ENCODE measurements at regions of chr3 and their contacts with region 1.

Region 1: GRCh38 chr3:150721285-150722130 is 17.8 kb upstream of the ERICH6 start:
- DNase-seq: no peak
- ATAC-seq: peak; percentile 37 to 81 (median 77)
- H3K4me3 ChIP-seq: peak overlapping the region in 1 of 12 donors; percentile 11
- H3K27ac ChIP-seq: no peak overlapping the region
- H3K4me1 ChIP-seq: peaks cover 0 to 7% (median 4%) of the 10 kb centered on the region in 12 donors
- H3K27me3 ChIP-seq: no peaks in the 10 kb centered on the region
- CTCF ChIP-seq: peak; percentile 78 to 92 (median 84)
- POLR2A ChIP-seq: no peak

Region 2: GRCh38 chr3:150408221-150409102 is 313.0 kb before region 1 on chr3 and contains the start of gene TSC22D2:
- intact Hi-C with region 1: no loop called
- DNase-seq: peak; percentile 96 to 98 (median 96)
- ATAC-seq: peak; percentile 72 to 89 (median 85)
- H3K4me3 ChIP-seq: peak within 1 kb of the TSS; percentile 71 to 92 (median 86)
- H3K27ac ChIP-seq: peak within 1 kb of the TSS; percentile 96 to 100 (median 99)
- H3K4me1 ChIP-seq: peaks cover 0 to 32% (median 10%) of the 10 kb centered on the region in 12 donors
- H3K27me3 ChIP-seq: no peaks in the 10 kb centered on the region
- CTCF ChIP-seq: peak in 5 of 12 donors; percentile 14 to 43 (median 23)
- POLR2A ChIP-seq: peak; percentile 98 to 99
- total RNA-seq, gene TSC22D2: 12.7 to 55.8 (median 32.6) TPM

Region 3: DNA sequence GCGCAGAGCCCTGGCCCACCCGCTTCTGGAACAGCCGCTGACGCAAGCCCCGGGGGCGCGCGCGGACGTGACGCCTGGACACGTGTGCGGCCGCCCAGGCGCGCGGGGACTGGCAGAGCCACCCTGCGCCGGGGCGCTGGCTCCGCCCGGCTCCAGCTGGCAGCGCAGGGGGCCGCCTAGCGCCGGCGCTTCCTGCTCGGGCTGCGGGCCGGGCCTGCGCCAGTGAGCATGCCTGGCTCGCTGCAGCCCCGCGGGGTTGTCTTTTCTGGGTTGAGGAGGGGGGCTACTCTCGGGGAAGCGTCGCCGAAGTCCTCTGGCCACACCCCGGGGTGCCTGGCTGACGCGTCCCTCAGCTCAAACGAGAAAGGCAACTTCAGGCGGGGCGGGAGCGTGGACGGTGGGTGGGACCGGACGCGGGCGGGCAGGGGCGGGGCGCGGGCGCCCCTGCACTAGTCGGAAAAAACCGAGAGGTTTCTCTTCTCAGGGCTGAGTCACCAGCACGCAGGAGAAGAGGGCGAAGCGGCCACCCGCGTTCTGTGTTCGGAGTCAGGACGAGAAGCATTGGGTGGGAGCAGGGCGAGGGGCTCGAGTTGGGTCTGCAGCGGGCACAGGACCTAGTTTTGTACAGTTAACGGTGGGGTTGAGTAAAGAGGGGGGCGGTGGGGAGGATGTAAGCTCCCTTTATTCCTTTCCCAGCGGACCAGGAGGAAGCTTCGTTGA is 41.8 kb after region 1 on chr3 and contains the start of gene SIAH2:
- intact Hi-C with region 1: loop called in 8 of 10 experiments (anchors 2 to 5 kb)
- DNase-seq: peak; percentile 93 to 96 (median 95)
- ATAC-seq: peak; percentile 89 to 95 (median 92)
- H3K4me3 ChIP-seq: peak within 1 kb of the TSS; percentile 48 to 93 (median 83)
- H3K27ac ChIP-seq: peak within 1 kb of the TSS; percentile 87 to 99 (median 96)
- H3K4me1 ChIP-seq: peaks cover 5 to 42% (median 29%) of the 10 kb centered on the region in 12 donors
- H3K27me3 ChIP-seq: no peaks in the 10 kb centered on the region
- CTCF ChIP-seq: peak in 1 of 12 donors; percentile 9
- POLR2A ChIP-seq: peak in 1 of 2 donors; percentile 89
- total RNA-seq, gene SIAH2: 16.9 to 38.7 (median 23.4) TPM

Region 4: DNA sequence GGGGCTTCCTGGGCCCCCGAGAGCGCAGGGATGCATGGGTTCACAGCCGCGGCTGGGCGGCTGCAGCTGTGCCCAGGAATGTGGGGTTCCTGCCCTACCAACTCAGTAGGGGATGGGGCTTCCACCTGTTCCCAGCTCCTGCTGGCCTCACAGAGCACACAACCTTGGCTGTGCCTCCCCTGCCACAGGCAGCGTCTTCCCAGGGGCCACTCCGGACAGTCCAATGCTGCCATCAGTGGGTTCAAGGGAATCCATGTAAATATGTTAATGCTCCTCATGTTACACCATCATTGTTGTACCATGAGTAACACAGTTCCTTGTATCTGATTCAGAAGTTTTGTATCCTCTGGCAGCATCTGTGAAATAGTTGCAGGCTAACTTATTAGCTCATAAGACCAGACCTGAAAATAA is 53.6 kb after region 1 on chr3:
- intact Hi-C with region 1: loop called in 4 of 10 experiments (anchors 5 to 10 kb)
- DNase-seq: no peak
- ATAC-seq: no peak
- H3K4me3 ChIP-seq: no peak overlapping the region
- H3K27ac ChIP-seq: no peak overlapping the region
- H3K4me1 ChIP-seq: peaks cover 0 to 5% (median 0%) of the 10 kb centered on the region in 12 donors
- H3K27me3 ChIP-seq: no peaks in the 10 kb centered on the region
- CTCF ChIP-seq: no peak
- POLR2A ChIP-seq: no peak

Region 5: GRCh38 chr3:150787741-150788370 is 66.3 kb after region 1 on chr3:
- intact Hi-C with region 1: loop called in 4 of 10 experiments (anchors 2 to 10 kb)
- DNase-seq: peak; percentile 75 to 91 (median 86)
- ATAC-seq: peak in 3 of 4 donors; percentile 79 to 88 (median 84)
- H3K4me3 ChIP-seq: no peak overlapping the region
- H3K27ac ChIP-seq: no peak overlapping the region
- H3K4me1 ChIP-seq: no peaks in the 10 kb centered on the region
- H3K27me3 ChIP-seq: peaks cover 0 to 11% (median 0%) of the 10 kb centered on the region in 9 donors
- CTCF ChIP-seq: peak; percentile 77 to 95 (median 88)
- POLR2A ChIP-seq: no peak

Region 6: DNA sequence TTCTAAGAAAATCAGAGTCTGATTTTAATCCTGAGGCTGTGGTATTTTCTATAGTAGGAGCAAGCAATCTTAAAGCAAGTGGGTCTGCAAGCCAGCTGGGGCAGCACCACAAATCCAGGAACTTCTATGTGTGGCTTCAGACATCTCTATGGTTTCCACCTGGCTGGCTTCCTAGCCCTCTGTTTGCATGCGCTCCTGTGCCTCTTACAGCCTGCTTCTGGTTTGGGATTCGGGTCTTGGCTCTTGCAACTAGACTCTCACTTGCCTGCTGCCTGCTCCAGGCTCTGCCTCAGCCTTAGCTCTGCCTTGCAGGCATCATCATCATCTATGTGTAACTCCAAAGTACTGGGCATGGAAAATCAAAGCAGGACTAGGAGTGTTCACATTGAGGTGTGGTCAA is 140.3 kb after region 1 on chr3:
- intact Hi-C with region 1: loop called (anchors 1 to 5 kb)
- DNase-seq: no peak
- ATAC-seq: no peak
- H3K4me3 ChIP-seq: no peak overlapping the region
- H3K27ac ChIP-seq: no peak overlapping the region
- H3K4me1 ChIP-seq: peaks cover 0 to 2% (median 0%) of the 10 kb centered on the region in 12 donors
- H3K27me3 ChIP-seq: no peaks in the 10 kb centered on the region
- CTCF ChIP-seq: no peak
- POLR2A ChIP-seq: no peak

Region 7: DNA sequence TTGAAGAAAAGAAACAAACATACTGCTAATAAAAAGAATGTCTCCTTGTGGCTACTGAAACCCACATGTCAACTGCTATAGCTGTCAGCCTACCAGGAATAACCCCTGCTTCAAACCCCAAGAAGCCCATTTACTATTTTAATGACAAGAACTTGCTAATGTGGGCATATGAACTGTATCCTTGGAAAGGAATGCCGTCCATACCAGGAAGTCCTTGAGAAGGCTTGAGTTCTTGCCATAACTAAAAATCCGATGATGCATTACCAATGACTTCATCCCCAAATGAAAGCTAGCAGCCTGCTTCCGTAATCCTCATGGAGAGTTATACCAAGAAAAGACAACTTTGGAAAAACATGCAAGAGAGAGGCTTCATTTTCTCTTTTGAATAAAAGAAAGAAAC is 148.9 kb after region 1 on chr3:
- intact Hi-C with region 1: loop called in 9 of 10 experiments (anchors 1 to 5 kb)
- DNase-seq: no peak
- ATAC-seq: peak in 2 of 4 donors; percentile 49 to 73
- H3K4me3 ChIP-seq: no peak overlapping the region
- H3K27ac ChIP-seq: peak overlapping the region in 5 of 12 donors; percentile 27 to 46 (median 42)
- H3K4me1 ChIP-seq: peaks cover 0 to 9% (median 0%) of the 10 kb centered on the region in 12 donors
- H3K27me3 ChIP-seq: no peaks in the 10 kb centered on the region
- CTCF ChIP-seq: no peak
- POLR2A ChIP-seq: no peak

Region 8: GRCh38 chr3:151086484-151087456 is 365.3 kb after region 1 on chr3:
- intact Hi-C with region 1: loop called in 2 of 10 experiments (anchors 5 kb)
- DNase-seq: peak; percentile 70 to 79 (median 77)
- ATAC-seq: peak; percentile 82 to 94 (median 92)
- H3K4me3 ChIP-seq: peak overlapping the region; percentile 42 to 82 (median 66)
- H3K27ac ChIP-seq: peak overlapping the region in 4 of 12 donors; percentile 35 to 66 (median 46)
- H3K4me1 ChIP-seq: peaks cover 0 to 27% (median 7%) of the 10 kb centered on the region in 12 donors
- H3K27me3 ChIP-seq: peaks cover 0 to 57% (median 18%) of the 10 kb centered on the region in 9 donors
- CTCF ChIP-seq: peak in 9 of 12 donors; percentile 20 to 69 (median 46)
- POLR2A ChIP-seq: no peak

Measured in heart left ventricle (tissue), 16 donors.